ENCODE measurements at regions of chr22 and their contacts with region 1.

Region 1: DNA sequence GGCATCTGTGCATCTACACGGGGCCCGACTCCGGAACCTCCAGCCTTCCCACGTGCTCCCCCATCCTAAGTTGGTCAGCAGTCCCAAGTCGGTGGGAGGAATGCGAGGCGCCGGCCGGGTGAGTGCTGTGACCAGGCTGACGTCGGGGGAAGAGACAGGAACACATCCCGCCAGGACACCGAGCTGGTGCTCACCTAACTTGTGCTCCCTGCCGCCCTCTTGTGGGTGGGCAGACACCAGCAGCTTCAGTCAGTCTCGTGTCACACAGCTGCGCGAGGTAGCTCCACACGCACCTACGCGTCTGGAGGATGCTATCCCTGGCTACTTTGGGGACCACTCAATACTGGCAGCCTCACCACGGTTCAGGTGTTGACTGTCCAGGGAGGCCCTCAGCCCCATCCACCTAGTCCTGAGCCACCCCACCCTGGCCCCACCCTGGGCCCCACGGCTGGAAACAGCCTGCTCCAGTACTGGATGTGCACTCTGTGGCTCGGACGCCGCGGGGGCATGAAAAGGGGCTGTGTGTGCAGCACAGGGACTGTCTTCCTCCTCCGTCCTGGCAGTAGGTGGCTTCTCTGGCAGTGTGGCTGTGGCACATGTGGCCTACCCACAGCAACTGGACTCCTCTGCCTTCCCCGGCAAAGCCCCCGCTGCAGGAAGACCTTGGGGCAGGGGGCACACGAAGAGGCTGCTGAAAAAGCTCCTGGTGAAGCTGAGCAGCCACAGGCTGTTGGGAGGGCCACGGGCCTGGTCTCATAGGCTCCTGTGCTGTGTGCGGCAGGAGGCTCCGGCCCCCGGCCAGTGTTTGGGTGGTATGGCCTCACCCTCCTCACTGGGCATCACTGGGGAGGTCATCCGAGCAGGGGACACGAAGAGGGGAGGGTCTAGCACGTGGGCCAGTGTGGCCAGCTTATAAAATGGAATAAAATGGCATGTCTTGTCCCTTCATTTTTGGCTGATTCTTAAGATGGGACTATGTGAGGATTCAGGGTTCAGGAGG is 11.2 kb upstream of the BID start:
- H3K4me3 ChIP-seq: no peak overlapping the region
- H3K27ac ChIP-seq: no peak overlapping the region
- H3K4me1 ChIP-seq: peaks cover 3% of the 10 kb centered on the region; the same call in 1 of the 2 replicates
- CTCF ChIP-seq: peak; percentile 88

Region 2: GRCh38 chr22:17559188-17559587 is 226.3 kb before region 1 on chr22:
- CTCF ChIA-PET with region 1: interaction called, 14 read pairs
- POLR2A ChIA-PET with region 1: no interaction called
- H3K4me3 ChIP-seq: no peak overlapping the region
- H3K27ac ChIP-seq: no peak overlapping the region
- H3K4me1 ChIP-seq: no peaks in the 10 kb centered on the region
- CTCF ChIP-seq: no peak

Measured in HEK293 (cell line).